ENCODE measurements at regions of chr2 and their contacts with region 1.

Region 1: GRCh38 chr2:217785544-217786045 is 217.2 kb downstream of the TNS1 start:
- DNase-seq: peak in 1 of 2 donors; percentile 74
- ATAC-seq: peak; percentile 28 to 37
- H3K4me3 ChIP-seq: no peak overlapping the region
- H3K27ac ChIP-seq: no peak overlapping the region
- H3K4me1 ChIP-seq: peaks cover 11 to 15% of the 10 kb centered on the region in 2 donors
- H3K27me3 ChIP-seq: no peaks in the 10 kb centered on the region
- CTCF ChIP-seq: peak; percentile 96 to 97 (median 97)
- POLR2A ChIP-seq: no peak

Region 2: DNA sequence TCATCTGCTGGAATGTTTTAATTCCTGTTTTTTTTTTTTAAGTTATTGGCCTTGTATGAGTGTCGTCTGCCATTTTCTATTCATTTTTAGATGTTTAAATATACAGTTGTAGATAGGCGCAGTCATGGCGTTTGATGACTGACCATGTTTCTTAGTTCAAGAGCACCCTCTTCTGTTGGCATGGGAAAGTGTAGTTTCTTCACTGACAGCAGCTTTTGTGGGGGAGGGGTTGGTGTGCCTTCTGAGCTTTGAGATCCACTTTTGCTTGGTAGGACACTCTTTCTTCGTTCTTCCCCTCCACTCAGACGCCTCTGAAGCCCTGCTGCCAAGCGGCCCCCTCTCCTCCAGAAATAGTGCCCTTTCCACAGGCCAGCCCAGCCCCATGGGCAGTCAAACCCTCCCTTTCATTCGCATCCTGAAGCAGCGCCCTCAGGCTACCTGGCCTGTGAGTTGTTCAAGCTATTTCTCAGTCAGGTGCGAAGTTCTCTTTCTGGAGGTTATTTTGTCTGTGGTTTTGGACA is 274.8 kb before region 1 on chr2:
- in situ Hi-C with region 1: no loop called
- intact Hi-C with region 1: no loop called
- DNase-seq: peak; percentile 25 to 60
- ATAC-seq: peak; percentile 96 to 98
- H3K4me3 ChIP-seq: no peak overlapping the region
- H3K27ac ChIP-seq: no peak overlapping the region
- H3K4me1 ChIP-seq: no peaks in the 10 kb centered on the region
- H3K27me3 ChIP-seq: no peaks in the 10 kb centered on the region
- CTCF ChIP-seq: peak; percentile 51 to 72 (median 69)
- POLR2A ChIP-seq: no peak

Region 3: GRCh38 chr2:217872319-217872718 is 86.7 kb after region 1 on chr2:
- in situ Hi-C with region 1: loop called in 1 of 4 experiments (anchors 5 kb)
- intact Hi-C with region 1: loop called (anchors 5 kb)
- DNase-seq: no peak
- ATAC-seq: no peak
- H3K4me3 ChIP-seq: no peak overlapping the region
- H3K27ac ChIP-seq: peak overlapping the region; percentile 23 to 87 (median 85)
- H3K4me1 ChIP-seq: peaks cover 40 to 41% of the 10 kb centered on the region in 2 donors
- H3K27me3 ChIP-seq: no peaks in the 10 kb centered on the region
- CTCF ChIP-seq: peak in 2 of 5 experiments; percentile 21 to 32
- POLR2A ChIP-seq: no peak

Region 4: DNA sequence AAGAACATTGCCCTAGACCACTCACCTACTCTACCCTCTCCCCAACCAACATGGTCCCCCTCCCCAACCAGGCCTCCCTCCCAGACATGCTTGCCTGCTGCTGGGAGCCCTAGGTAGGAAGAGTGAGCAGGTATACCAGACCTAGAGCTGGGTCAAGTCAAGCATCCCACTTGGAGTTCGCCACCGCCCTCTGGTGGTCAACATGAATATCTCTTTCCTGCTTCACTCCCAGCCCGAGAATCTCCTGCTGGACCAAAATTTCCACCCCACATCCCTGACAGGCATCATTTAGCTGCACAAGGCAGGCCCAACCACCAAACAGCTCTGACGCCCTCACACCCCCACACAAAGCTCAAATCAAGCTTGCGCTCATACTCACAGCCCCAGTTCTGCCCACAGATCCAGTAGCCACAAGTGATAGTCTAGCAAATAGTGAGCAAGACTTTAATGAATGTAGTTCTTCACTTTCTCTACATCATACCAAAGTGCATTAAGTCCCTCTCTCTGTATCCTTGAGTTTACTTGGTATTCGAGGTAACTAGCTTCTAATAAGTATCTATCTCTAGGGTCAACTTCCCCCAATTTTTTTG is 101.2 kb after region 1 on chr2:
- in situ Hi-C with region 1: loop called (anchors 5 kb)
- intact Hi-C with region 1: loop called (anchors 1 kb)
- DNase-seq: peak; percentile 66 to 76
- ATAC-seq: peak; percentile 44 to 69
- H3K4me3 ChIP-seq: no peak overlapping the region
- H3K27ac ChIP-seq: peak overlapping the region; percentile 43 to 87 (median 74)
- H3K4me1 ChIP-seq: peaks cover 25 to 26% of the 10 kb centered on the region in 2 donors
- H3K27me3 ChIP-seq: no peaks in the 10 kb centered on the region
- CTCF ChIP-seq: peak; percentile 81 to 95 (median 89)
- POLR2A ChIP-seq: no peak

Region 5: DNA sequence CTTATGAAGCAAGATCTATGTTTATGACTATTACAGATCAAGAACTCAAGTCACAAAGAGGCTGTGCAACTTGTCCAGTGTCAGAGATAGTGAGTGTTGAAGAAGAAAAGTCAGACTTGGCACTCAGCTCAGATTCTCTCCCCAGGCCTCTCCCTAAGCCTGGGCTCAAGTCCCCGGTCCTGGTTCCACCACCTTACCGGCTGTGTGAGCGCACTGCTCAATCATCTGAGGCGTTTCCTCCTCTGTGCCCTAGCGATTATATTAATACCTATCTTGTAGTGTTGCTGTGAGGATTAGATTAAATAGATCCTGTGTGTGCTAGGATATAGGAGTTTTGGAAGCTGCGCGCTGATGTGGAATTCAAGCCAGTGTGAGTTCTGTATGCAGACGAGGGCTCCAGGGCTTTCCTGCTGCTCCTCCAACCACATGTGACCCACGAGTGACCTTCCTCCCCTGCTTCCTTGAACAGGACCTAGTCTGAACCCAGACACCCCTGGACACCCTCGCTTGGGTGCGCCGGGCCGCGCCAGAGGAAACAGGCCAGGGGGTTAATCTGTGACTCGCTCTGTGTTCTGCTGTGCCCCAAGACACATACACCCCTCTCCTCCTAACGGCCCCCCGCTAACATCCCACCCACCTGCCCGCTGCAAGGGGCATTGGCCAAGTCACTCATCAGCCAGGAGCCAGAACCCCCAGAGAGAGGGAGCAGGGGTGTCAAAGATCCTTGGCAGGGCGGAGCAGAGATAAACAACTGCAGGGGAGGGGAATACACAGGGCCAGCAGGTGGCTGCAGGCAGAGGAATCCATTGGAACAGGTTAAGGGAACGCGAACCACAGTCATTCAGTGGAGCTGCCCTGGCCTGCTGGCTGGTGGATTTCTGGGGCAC is 178.9 kb after region 1 on chr2:
- in situ Hi-C with region 1: no loop called
- intact Hi-C with region 1: no loop called
- DNase-seq: no peak
- ATAC-seq: peak; percentile 51 to 67
- H3K4me3 ChIP-seq: no peak overlapping the region
- H3K27ac ChIP-seq: peak overlapping the region; percentile 58 to 70 (median 64)
- H3K4me1 ChIP-seq: peaks cover 27 to 30% of the 10 kb centered on the region in 2 donors
- H3K27me3 ChIP-seq: no peaks in the 10 kb centered on the region
- CTCF ChIP-seq: peak in 1 of 5 experiments; percentile 14
- POLR2A ChIP-seq: no peak

Region 6: GRCh38 chr2:218033590-218034496 is 248.2 kb after region 1 on chr2:
- in situ Hi-C with region 1: no loop called
- intact Hi-C with region 1: loop called (anchors 2 kb)
- DNase-seq: peak in 1 of 2 donors; percentile 12
- ATAC-seq: no peak
- H3K4me3 ChIP-seq: no peak overlapping the region
- H3K27ac ChIP-seq: no peak overlapping the region
- H3K4me1 ChIP-seq: peaks cover 11 to 16% of the 10 kb centered on the region in 2 donors
- H3K27me3 ChIP-seq: no peaks in the 10 kb centered on the region
- CTCF ChIP-seq: no peak
- POLR2A ChIP-seq: no peak

Region 7: GRCh38 chr2:218069606-218070300 is 284.2 kb after region 1 on chr2:
- in situ Hi-C with region 1: no loop called
- intact Hi-C with region 1: loop called (anchors 2 kb)
- DNase-seq: no peak
- ATAC-seq: no peak
- H3K4me3 ChIP-seq: no peak overlapping the region
- H3K27ac ChIP-seq: no peak overlapping the region
- H3K4me1 ChIP-seq: peaks cover 0 to 3% of the 10 kb centered on the region in 2 donors
- H3K27me3 ChIP-seq: peaks cover 0 to 3% (median 0%) of the 10 kb centered on the region in 3 donors
- CTCF ChIP-seq: no peak
- POLR2A ChIP-seq: no peak

Region 8: GRCh38 chr2:218322895-218323808 is 537.6 kb after region 1 on chr2:
- in situ Hi-C with region 1: no loop called
- intact Hi-C with region 1: no loop called
- DNase-seq: peak; percentile 28 to 30
- ATAC-seq: peak; percentile 68 to 70
- H3K4me3 ChIP-seq: peak overlapping the region; percentile 62 to 79 (median 75)
- H3K27ac ChIP-seq: peak overlapping the region; percentile 44 to 69 (median 64)
- H3K4me1 ChIP-seq: peaks cover 0 to 7% of the 10 kb centered on the region in 2 donors
- H3K27me3 ChIP-seq: no peaks in the 10 kb centered on the region
- CTCF ChIP-seq: no peak
- POLR2A ChIP-seq: peak in 1 of 2 donors; percentile 29